ENCODE measurements at regions of chr1 and their contacts with region 1.

Region 1: DNA sequence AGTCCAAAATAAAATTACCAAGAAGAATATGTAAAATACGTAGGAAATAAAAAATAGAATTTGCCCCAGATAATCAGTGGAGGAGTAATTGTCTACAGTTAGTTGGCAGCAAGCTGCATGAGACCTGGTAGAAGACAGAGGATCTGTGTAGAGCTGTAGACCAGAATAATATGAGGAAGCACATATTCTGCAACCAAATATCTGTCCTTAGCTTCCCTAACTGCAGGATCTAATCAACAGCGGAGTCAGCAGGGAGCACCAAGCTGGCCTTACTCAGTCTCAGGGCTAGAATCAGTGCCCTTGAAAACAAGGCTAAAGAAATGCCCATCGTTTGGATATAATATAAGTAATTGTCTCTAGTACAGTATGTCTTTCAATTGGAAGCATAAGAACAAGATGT is 6.1 kb upstream of the GCSAML start:
- DNase-seq: no peak
- ATAC-seq: no peak
- H3K4me3 ChIP-seq: no peak overlapping the region
- H3K27ac ChIP-seq: no peak overlapping the region
- H3K4me1 ChIP-seq: no peaks in the 10 kb centered on the region
- H3K27me3 ChIP-seq: no peaks in the 10 kb centered on the region
- CTCF ChIP-seq: no peak
- POLR2A ChIP-seq: no peak
- RAD21 ChIP-seq: no peak

Region 2: DNA sequence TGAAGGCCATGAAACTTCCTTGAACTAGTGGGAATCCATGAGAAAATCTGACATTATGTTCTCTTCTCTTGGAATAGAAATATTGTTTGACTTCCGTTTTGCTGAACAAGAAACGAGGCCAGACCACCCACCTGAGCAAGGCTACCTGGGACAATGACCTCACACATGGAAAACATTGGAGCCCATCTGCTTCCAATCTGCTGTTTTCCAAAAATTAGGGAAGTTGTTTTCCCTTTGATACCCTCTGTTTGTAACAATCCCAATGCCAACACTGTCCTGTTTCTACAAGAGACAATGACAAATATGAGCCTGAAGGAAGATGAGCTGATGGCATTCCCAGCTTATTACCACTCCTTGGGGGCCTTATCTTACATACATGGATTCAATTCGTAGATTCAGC is 36.0 kb before region 1 on chr1:
- CTCF ChIA-PET with region 1: no interaction called
- POLR2A ChIA-PET with region 1: no interaction called
- dilution Hi-C with region 1: no loop called
- in situ Hi-C with region 1: no loop called
- intact Hi-C with region 1: loop called (anchors 1 kb)
- DNase-seq: no peak
- ATAC-seq: no peak
- H3K4me3 ChIP-seq: no peak overlapping the region
- H3K27ac ChIP-seq: no peak overlapping the region
- H3K4me1 ChIP-seq: no peaks in the 10 kb centered on the region
- H3K27me3 ChIP-seq: no peaks in the 10 kb centered on the region
- CTCF ChIP-seq: no peak
- POLR2A ChIP-seq: no peak
- RAD21 ChIP-seq: no peak